Activated B cell treated with CpG ODN at 0.5 μM for 24 hours (primary cell): ENCODE measurements at regions of chrX and their contacts with region 1.

Region 1: GRCh38 chrX:76253432-76253831 is 80.6 kb downstream of the PBDC1 start:
- DNase-seq: no peak
- ATAC-seq: peak; percentile 71
- H3K4me3 Mint-ChIP-seq: no peak overlapping the region
- H3K27ac Mint-ChIP-seq: no peak overlapping the region
- H3K4me1 Mint-ChIP-seq: peaks cover 3% of the 10 kb centered on the region
- H3K27me3 Mint-ChIP-seq: no peaks in the 10 kb centered on the region
- CTCF ChIP-seq: no peak

Region 2: GRCh38 chrX:75067931-75068330 is 1185.5 kb before region 1 on chrX:
- CTCF ChIA-PET with region 1: no interaction called
- POLR2A ChIA-PET with region 1: no interaction called
- intact Hi-C with region 1: no loop called
- DNase-seq: no peak
- ATAC-seq: no peak
- H3K4me3 Mint-ChIP-seq: no peak overlapping the region
- H3K27ac Mint-ChIP-seq: no peak overlapping the region
- H3K4me1 Mint-ChIP-seq: no peaks in the 10 kb centered on the region
- H3K27me3 Mint-ChIP-seq: no peaks in the 10 kb centered on the region
- CTCF ChIP-seq: no peak

Region 3: DNA sequence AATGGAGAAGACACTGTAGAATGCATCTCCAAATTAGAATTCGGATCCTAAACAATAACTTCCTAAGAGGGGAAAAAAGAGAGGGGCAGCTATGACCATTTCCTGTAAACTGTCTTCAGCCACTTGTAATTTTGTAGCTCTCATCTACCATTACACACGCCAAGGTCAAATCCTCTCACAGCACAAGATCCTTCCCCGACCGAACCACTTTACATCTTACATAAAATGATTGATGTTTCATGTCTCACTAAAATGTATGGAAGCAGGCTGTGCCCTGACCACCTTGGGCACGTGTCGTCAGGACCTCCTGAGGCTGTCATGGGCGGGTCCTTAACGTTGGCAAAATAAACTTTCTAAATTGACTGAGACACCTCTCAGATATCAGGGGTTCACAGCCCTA is 104.7 kb before region 1 on chrX:
- CTCF ChIA-PET with region 1: interaction called, 3 read pairs
- POLR2A ChIA-PET with region 1: no interaction called
- intact Hi-C with region 1: loop called (anchors 5 kb)
- DNase-seq: peak; percentile 21
- ATAC-seq: peak; percentile 20
- H3K4me3 Mint-ChIP-seq: peak overlapping the region; percentile 80
- H3K27ac Mint-ChIP-seq: peak overlapping the region; percentile 99
- H3K4me1 Mint-ChIP-seq: peaks cover 16% of the 10 kb centered on the region
- H3K27me3 Mint-ChIP-seq: no peaks in the 10 kb centered on the region
- CTCF ChIP-seq: no peak

Region 4: DNA sequence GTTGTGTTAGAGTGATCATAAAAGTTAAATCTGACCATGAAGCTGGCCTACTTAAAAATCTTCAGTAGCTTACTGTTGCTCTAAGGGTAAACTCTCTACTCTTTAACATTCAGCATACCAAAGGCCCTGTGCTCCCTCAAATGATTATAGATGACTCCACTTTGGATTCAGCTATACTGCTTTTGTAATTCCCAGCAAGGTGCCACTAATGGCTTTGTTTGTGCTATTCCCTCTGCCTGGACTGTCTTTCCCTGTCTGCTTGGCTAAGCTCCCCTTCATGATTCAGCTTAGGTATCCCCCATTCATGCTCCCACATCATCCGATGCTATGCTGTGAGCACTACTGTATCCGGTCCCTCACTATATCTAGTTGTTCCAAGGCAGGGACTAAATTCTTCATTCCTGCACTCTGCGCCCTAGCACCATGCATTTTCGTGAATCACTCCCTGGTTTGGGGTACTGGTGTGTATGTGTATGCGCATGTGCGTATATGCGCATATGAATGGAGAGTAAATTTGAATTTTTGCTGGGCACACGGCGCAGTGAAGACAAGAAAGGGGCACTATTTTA is 81.0 kb before region 1 on chrX:
- CTCF ChIA-PET with region 1: interaction called, 3 read pairs
- POLR2A ChIA-PET with region 1: interaction called, 3 read pairs
- intact Hi-C with region 1: loop called (anchors 5 kb)
- DNase-seq: no peak
- ATAC-seq: peak; percentile 51
- H3K4me3 Mint-ChIP-seq: peak overlapping the region; percentile 97
- H3K27ac Mint-ChIP-seq: peak overlapping the region; percentile 92
- H3K4me1 Mint-ChIP-seq: peaks cover 42% of the 10 kb centered on the region
- H3K27me3 Mint-ChIP-seq: no peaks in the 10 kb centered on the region
- CTCF ChIP-seq: no peak

Region 5: DNA sequence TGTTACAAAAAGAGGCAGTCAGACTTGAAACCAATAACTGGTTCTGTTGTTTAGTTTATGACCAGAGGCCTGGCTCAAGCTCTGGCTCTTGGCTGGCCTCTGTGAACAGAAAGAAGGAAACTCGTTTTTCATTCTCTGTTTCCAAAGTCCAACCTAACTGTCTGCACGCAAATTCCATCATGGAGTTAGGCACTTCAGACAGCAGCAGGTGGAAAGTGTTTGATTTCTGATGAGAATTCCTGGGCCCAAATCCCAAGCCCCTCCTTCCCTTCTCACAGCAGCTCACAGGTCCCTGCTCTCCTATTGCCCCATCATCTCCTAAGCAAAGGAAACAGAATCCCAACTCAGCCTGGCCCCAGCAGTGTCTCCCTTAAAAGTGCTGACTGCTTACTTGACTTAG is 1151.0 kb after region 1 on chrX:
- CTCF ChIA-PET with region 1: no interaction called
- POLR2A ChIA-PET with region 1: no interaction called
- intact Hi-C with region 1: no loop called
- DNase-seq: no peak
- ATAC-seq: no peak
- H3K4me3 Mint-ChIP-seq: no peak overlapping the region
- H3K27ac Mint-ChIP-seq: no peak overlapping the region
- H3K4me1 Mint-ChIP-seq: no peaks in the 10 kb centered on the region
- H3K27me3 Mint-ChIP-seq: no peaks in the 10 kb centered on the region
- CTCF ChIP-seq: no peak